ENCODE measurements at regions of chr11 and their contacts with region 1.

Region 1: DNA sequence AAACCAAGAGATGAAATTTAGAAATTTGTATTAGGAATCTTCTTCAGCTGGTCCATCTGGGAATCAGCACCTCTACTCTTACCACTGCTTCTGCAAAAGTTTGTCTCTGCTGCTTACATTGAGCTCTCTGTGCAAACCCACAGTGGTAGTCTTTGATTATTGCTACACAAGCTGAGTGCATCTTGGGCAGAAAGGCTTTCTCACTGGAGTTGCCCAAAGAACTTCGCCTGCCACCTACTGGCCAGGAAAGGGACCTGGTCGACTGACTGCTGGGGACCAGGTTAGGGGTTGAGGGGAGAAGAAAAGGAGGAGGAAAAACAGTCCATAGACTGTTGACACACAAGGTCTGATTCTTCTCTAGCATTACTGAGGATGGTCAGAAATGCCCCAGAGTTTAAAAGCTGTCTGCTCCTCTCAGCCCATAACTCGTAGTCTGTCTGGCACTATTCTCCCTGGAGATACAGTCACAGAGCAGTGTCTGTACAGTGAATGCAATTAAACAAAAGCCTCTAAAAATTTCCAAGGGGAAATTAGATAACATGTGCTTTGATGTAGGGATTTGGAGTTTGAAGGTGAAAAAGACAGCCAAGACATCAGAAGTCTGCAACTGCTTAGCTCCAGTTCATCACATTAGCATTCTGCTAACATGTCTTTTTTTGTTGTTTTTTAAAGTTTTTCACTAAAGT is 215.0 kb upstream of the CTSC start:
- DNase-seq: no peak
- H3K4me3 ChIP-seq: no peak overlapping the region
- H3K27ac ChIP-seq: no peak overlapping the region
- H3K27me3 ChIP-seq: no peaks in the 10 kb centered on the region
- CTCF ChIP-seq: peak; percentile 71

Region 2: DNA sequence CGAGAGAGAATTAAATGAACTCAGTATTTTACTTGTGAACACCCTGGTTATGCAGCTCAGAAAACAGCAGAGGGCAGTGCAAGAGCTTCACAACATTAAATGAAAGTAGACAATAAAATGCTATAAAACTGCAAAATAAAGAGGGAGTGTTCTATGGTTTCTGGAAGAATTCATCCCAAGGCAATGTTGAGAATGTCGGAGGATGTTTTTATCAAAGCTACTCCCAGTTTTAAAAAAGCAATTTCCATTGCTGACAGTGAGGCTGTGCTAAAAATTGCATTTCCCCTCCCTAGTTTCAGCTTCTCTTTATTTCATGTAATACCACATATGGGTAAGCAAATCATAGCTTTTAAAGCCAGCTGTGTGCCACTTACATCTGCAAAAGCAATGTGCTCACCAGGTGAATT is 674.1 kb before region 1 on chr11:
- CTCF ChIA-PET with region 1: interaction called, 12 read pairs
- POLR2A ChIA-PET with region 1: no interaction called
- DNase-seq: peak; percentile 16
- H3K4me3 ChIP-seq: no peak overlapping the region
- H3K27ac ChIP-seq: no peak overlapping the region
- H3K27me3 ChIP-seq: no peaks in the 10 kb centered on the region
- CTCF ChIP-seq: peak; percentile 61

Region 3: DNA sequence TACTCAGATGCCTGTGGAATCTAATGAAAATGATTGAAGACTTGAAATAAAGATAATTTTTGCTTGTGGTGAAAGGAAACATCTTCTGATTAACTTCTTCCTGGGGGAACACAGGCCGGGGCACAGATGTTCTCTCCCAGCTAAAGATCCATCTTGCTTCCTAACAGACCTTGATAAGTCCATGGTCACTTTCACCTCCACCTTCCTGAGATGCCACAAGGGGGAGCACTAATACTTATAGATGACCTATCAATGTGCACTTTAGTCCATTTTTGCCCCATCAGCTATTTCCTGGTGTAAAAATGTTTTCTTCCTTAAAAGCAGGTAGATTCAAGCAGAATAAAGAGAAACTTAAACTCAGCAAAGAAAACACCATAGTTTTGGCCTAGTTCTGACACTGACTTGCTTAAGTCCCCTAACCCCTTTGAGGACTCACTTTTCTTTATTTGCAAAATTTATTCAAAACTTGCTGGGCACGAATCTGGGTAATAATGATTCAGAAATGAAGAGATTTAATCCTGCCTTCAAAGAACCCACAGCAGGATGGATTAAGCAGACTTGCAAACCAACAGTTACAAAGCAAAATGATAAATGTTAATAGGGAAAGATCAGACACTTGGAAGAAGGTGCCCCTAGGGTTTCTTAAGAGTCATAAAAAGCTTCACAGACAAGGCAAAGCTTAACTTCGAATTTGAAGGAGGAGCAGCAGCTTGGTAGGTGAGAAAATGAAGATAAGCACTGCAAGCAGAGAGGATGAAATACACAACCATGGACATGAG is 535.9 kb before region 1 on chr11:
- CTCF ChIA-PET with region 1: interaction called, 67 read pairs
- POLR2A ChIA-PET with region 1: no interaction called
- DNase-seq: peak; percentile 72
- H3K4me3 ChIP-seq: no peak overlapping the region
- H3K27ac ChIP-seq: no peak overlapping the region
- H3K27me3 ChIP-seq: no peaks in the 10 kb centered on the region
- CTCF ChIP-seq: peak; percentile 81

Region 4: DNA sequence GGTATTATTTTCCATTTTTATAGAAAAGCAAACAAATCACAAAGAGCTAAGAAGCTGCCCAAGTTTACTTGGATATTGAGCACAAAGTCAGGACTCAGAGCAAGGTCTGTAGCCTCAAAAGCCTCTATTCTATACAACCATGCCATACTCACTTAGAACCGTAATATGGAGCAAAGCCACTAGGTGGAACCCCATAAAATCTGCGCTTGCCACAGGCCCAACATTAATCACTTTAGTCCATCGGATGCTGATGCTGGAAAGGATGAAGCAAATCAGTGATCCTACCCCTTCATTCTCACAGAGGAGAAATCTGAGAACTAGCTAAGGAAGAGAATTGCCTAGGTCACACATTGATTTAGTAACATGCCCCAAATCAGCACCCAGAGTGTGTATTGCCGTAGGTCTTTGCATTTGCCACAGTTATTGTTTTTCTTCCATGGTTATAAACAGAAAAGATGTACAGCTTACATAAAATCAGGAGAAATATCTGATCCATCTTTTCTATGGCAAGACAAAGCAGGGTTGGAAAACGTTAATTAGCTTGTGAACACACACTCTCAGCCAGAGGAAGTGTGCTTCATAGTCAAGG is 320.5 kb before region 1 on chr11:
- CTCF ChIA-PET with region 1: interaction called, 18 read pairs
- POLR2A ChIA-PET with region 1: no interaction called
- DNase-seq: peak; percentile 3
- H3K4me3 ChIP-seq: no peak overlapping the region
- H3K27ac ChIP-seq: no peak overlapping the region
- H3K27me3 ChIP-seq: no peaks in the 10 kb centered on the region
- CTCF ChIP-seq: peak; percentile 76

Region 5: GRCh38 chr11:88439356-88439755 is 113.2 kb before region 1 on chr11:
- CTCF ChIA-PET with region 1: no interaction called
- POLR2A ChIA-PET with region 1: no interaction called
- DNase-seq: no peak
- H3K4me3 ChIP-seq: no peak overlapping the region
- H3K27ac ChIP-seq: no peak overlapping the region
- H3K27me3 ChIP-seq: no peaks in the 10 kb centered on the region
- CTCF ChIP-seq: no peak

Region 6: GRCh38 chr11:88535916-88536547 is 16.5 kb before region 1 on chr11:
- CTCF ChIA-PET with region 1: interaction called, 24 read pairs
- POLR2A ChIA-PET with region 1: interaction called, 3 read pairs
- DNase-seq: peak; percentile 42
- H3K4me3 ChIP-seq: no peak overlapping the region
- H3K27ac ChIP-seq: peak overlapping the region; percentile 3
- H3K27me3 ChIP-seq: no peaks in the 10 kb centered on the region
- CTCF ChIP-seq: no peak